H1 (cell line): ENCODE measurements at regions of chr11 and their contacts with region 1.

Region 1: GRCh38 chr11:33039274-33040032 is at the start of gene TCP11L1:
- DNase-seq: peak; percentile 88 to 91
- H3K4me3 ChIP-seq: peak within 1 kb of the TSS; percentile 77 to 89 (median 82)
- H3K27ac ChIP-seq: peak within 1 kb of the TSS; percentile 97
- H3K4me1 ChIP-seq: peaks cover 0 to 5% (median 4%) of the 10 kb centered on the region in 4 experiments; a peak in 4 of 7 replicates
- H3K27me3 ChIP-seq: no peaks in the 10 kb centered on the region
- CTCF ChIP-seq: no peak
- EP300 ChIP-seq: no peak
- POLR2A ChIP-seq: peak in 1 of 2 experiments; percentile 74; a peak in 2 of 3 replicates
- RAD21 ChIP-seq: no peak
- total RNA-seq, gene TCP11L1: 23.1 and 24.0 TPM in 2 replicates

Region 2: GRCh38 chr11:32893343-32894148 is 145.9 kb before region 1 on chr11:
- CTCF ChIA-PET with region 1: interaction called, 3 read pairs
- POLR2A ChIA-PET with region 1: interaction called, 15 read pairs
- DNase-seq: peak in 1 of 2 experiments; percentile 80
- H3K4me3 ChIP-seq: peak overlapping the region; percentile 84 to 98 (median 93)
- H3K27ac ChIP-seq: peak overlapping the region; percentile 97
- H3K4me1 ChIP-seq: peaks cover 2 to 25% (median 7%) of the 10 kb centered on the region in 4 experiments
- H3K27me3 ChIP-seq: no peaks in the 10 kb centered on the region
- CTCF ChIP-seq: peak; percentile 32 to 51 (median 36); a peak in 3 of 4 replicates
- EP300 ChIP-seq: no peak
- POLR2A ChIP-seq: peak in 1 of 2 experiments; percentile 36; a peak in 1 of 3 replicates
- RAD21 ChIP-seq: peak; percentile 17 to 42; a peak in 3 of 4 replicates

Region 3: GRCh38 chr11:32918427-32918826 is 121.0 kb before region 1 on chr11:
- CTCF ChIA-PET with region 1: no interaction called
- POLR2A ChIA-PET with region 1: no interaction called
- DNase-seq: no peak
- H3K4me3 ChIP-seq: no peak overlapping the region
- H3K27ac ChIP-seq: no peak overlapping the region
- H3K4me1 ChIP-seq: peaks cover 0 to 2% (median 0%) of the 10 kb centered on the region in 4 experiments; a peak in 2 of 7 replicates
- H3K27me3 ChIP-seq: no peaks in the 10 kb centered on the region
- CTCF ChIP-seq: no peak
- EP300 ChIP-seq: no peak
- POLR2A ChIP-seq: no peak
- RAD21 ChIP-seq: no peak

Region 4: GRCh38 chr11:33015621-33016551 is 23.6 kb before region 1 on chr11 and contains the start of gene DEPDC7:
- CTCF ChIA-PET with region 1: interaction called, 5 read pairs
- POLR2A ChIA-PET with region 1: interaction called, 21 read pairs
- DNase-seq: peak; percentile 76 to 96
- H3K4me3 ChIP-seq: peak within 1 kb of the TSS; percentile 49 to 70 (median 66)
- H3K27ac ChIP-seq: no peak within 1 kb of the TSS
- H3K4me1 ChIP-seq: peaks cover 3 to 6% (median 3%) of the 10 kb centered on the region in 4 experiments; a peak in 6 of 7 replicates
- H3K27me3 ChIP-seq: peaks cover 0 to 12% (median 5%) of the 10 kb centered on the region in 4 experiments; a peak in 4 of 7 replicates
- CTCF ChIP-seq: no peak
- EP300 ChIP-seq: no peak
- POLR2A ChIP-seq: peak; percentile 48 to 64
- RAD21 ChIP-seq: no peak
- total RNA-seq, gene DEPDC7: 6.3 and 7.6 TPM in 2 replicates

Region 5: GRCh38 chr11:33052231-33052630 is 12.8 kb after region 1 on chr11:
- CTCF ChIA-PET with region 1: interaction called, 3 read pairs
- POLR2A ChIA-PET with region 1: interaction called, 20 read pairs
- DNase-seq: no peak
- H3K4me3 ChIP-seq: no peak overlapping the region
- H3K27ac ChIP-seq: no peak overlapping the region
- H3K4me1 ChIP-seq: no peaks in the 10 kb centered on the region
- H3K27me3 ChIP-seq: no peaks in the 10 kb centered on the region
- CTCF ChIP-seq: no peak
- EP300 ChIP-seq: no peak
- POLR2A ChIP-seq: no peak
- RAD21 ChIP-seq: no peak